Posterior vena cava (tissue), 2 donors: ENCODE measurements at regions of chr1 and their contacts with region 1.

Region 1: DNA sequence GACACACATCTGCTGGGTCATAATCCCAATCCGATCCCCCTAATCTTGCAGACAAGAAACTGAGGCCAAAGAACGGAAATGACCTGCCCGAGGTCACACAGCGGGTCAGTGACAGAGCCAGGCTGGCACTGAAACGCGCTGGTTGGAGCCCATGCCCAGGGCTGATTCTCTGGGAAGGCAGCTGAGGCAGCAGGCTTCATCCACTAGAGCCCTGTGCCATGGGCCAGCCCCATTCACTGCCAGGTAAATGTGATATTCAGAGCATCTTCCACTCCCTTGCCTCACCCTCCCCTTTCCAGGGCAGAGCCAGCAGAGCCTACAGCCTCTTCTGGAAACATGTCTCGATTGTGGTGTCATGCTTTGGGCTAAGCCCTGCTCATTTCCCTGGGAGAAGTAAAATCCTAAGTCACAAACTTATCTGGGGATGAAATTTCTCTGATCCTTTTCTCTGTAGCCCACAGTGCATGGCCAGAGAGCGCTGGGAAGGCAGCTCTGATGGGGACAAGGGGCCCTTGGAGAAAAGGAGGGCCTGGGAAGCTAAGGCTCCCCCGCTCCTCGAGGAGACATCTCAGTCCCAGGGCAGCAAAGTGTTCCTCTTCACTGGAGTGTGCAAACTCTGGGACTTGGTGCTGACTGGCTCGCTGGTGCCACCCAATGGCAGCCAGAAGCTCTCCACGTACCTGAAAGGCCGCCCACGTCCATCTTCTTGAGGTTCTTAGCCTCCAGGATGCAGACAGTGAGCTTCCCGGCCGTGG is 110.4 kb downstream of the SYT2 start:
- DNase-seq: no peak

Region 2: DNA sequence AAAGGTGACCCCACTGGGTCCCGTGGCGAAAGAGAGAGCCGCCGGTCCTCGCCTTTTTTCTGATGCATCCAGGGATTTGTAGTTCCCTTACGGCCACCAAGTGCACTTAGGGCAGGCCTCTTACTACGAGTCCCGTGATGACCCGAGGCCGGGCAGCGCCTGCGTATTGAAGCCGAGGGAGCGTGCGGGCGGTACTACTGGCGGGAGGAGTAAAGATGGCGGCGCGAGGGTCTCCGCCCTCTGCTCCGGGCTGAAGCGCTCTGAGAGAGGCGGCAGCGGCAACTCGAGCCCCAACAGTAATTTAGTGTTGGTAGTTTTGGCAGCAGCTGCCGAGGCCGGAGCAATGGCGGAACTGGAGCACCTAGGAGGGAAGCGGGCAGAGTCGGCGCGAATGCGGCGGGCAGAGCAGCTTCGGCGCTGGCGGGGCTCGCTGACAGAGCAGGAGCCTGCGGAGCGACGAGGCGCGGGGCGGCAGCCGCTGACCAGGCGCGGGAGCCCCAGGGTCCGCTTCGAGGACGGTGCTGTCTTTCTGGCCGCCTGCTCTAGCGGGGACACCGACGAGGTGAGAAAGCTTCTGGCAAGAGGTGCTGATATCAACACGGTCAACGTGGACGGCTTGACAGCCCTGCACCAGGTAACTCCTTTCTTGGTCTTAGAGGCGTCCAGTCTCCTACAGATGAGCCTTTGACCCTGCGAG is 251.2 kb before region 1 on chr1 and contains the start of gene PPP1R12B:
- intact Hi-C with region 1: loop called in 1 of 2 experiments (anchors 10 kb)
- DNase-seq: peak; percentile 99
- total RNA-seq, gene PPP1R12B: 545 to 634 TPM

Region 3: DNA sequence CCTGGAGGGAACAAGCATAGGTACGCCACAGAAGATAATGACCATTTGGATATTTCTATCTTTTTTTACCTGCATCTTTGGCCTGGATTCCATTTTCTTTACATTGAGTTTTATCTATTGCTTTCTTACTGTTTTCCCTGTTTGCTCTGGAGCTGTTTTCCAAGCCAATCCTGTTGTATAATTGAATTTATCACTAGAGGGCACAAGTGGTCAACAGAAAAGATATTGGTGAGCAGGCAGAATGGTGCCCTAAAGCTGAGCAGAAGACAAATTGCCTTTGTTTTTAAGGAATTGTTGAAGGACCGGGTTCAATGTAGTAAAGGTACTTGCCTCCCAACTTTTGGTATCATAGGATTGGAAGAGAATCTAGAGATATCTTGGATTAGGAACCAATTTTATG is 98.6 kb before region 1 on chr1:
- intact Hi-C with region 1: loop called (anchors 5 to 10 kb)
- DNase-seq: no peak

Region 4: DNA sequence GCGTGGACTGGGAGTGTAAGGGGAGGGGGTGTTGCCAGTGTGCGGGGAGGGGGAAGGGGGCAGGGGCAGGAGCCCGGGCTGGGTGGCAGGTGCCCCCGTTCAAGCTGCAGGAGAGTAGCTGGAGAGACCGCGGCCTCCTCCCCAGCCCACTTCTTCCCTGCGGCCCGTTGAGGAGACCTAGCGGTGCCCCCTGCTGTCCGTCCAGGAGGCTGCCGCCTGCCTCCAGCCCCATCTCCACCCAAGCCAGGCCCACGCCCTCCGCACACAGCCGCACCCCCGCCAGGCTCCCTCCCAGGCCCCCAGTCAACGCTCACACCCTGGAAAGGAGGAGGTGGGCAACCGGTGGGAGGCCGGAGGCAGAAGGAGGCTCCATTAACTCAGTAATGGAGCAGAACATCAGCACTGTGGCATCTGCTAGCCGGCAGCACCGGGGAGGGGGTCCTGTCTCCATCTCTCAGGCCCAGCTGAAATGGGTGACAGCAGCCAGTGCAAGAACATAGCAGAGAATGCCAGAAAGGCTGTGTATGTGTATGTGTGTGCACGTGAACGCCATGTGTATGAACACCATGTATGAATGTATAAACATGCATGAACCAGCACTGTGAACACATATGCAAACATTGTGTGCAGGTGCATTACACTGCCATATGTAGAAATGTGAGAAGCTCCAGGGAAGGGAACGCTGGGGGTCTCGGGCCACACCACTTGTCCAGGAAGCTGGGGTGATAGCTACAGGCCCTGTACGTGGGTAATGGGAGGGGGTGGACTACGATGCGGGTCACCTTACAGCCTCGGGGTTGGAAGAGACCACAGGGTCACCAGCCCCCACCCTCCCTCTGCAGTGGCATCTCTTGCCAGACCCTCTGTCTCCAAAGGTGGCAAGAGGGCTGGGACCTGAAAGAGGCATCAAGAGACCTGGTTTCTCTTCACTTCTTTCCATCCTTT is 25.8 kb after region 1 on chr1:
- intact Hi-C with region 1: no loop called
- DNase-seq: peak; percentile 91